Activated CD8-positive, alpha-beta T cell treated with anti-CD3 and anti-CD28 coated beads, Interleukin-2, amount 10 ng/mL, durations not matched to agents 7 days and 5 days (primary cell): ENCODE measurements at regions of chr14 and their contacts with region 1.

Region 1: GRCh38 chr14:35883677-35884293 is 57.6 kb downstream of the BRMS1L start:
- DNase-seq: peak; percentile 57
- ATAC-seq: peak; percentile 49
- H3K4me3 Mint-ChIP-seq: no peak overlapping the region
- H3K27ac Mint-ChIP-seq: no peak overlapping the region
- H3K4me1 Mint-ChIP-seq: peaks cover 9% of the 10 kb centered on the region
- H3K27me3 Mint-ChIP-seq: no peaks in the 10 kb centered on the region

Region 2: DNA sequence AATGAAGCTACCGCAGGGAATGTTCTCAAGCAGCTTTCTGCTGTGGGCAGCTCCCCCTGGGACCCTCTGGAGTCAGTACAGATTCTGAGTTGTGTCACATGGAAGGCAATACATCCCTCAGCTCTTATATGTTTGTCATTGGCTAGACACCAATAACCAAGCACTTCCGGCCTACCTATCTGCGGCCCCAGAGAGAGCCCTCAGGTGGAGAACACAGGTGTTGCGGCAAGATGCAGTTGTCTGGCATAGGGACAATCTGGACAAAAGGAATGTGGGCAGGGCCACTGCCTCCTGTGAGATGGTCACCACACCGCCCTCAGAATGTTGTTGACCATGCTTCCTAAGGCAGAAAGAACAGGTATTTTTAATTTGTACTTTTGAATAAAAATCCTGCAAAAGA is 61.1 kb after region 1 on chr14:
- CTCF ChIA-PET with region 1: interaction called, 44 read pairs
- POLR2A ChIA-PET with region 1: no interaction called
- DNase-seq: peak; percentile 44
- ATAC-seq: no peak
- H3K4me3 Mint-ChIP-seq: no peak overlapping the region
- H3K27ac Mint-ChIP-seq: no peak overlapping the region
- H3K4me1 Mint-ChIP-seq: peaks cover 15% of the 10 kb centered on the region
- H3K27me3 Mint-ChIP-seq: no peaks in the 10 kb centered on the region

Region 3: GRCh38 chr14:35959835-35960234 is 76.0 kb after region 1 on chr14:
- CTCF ChIA-PET with region 1: interaction called, 11 read pairs
- POLR2A ChIA-PET with region 1: no interaction called
- DNase-seq: no peak
- ATAC-seq: no peak
- H3K4me3 Mint-ChIP-seq: no peak overlapping the region
- H3K27ac Mint-ChIP-seq: no peak overlapping the region
- H3K4me1 Mint-ChIP-seq: no peaks in the 10 kb centered on the region
- H3K27me3 Mint-ChIP-seq: peaks cover 11% of the 10 kb centered on the region

Region 4: GRCh38 chr14:36028218-36028617 is 144.4 kb after region 1 on chr14:
- CTCF ChIA-PET with region 1: interaction called, 13 read pairs
- POLR2A ChIA-PET with region 1: no interaction called
- DNase-seq: peak; percentile 33
- ATAC-seq: no peak
- H3K4me3 Mint-ChIP-seq: no peak overlapping the region
- H3K27ac Mint-ChIP-seq: no peak overlapping the region
- H3K4me1 Mint-ChIP-seq: no peaks in the 10 kb centered on the region
- H3K27me3 Mint-ChIP-seq: peaks cover 19% of the 10 kb centered on the region

Region 5: GRCh38 chr14:36373982-36374673 is 490.3 kb after region 1 on chr14:
- CTCF ChIA-PET with region 1: interaction called, 19 read pairs
- POLR2A ChIA-PET with region 1: no interaction called
- DNase-seq: peak; percentile 78
- ATAC-seq: peak; percentile 83
- H3K4me3 Mint-ChIP-seq: no peak overlapping the region
- H3K27ac Mint-ChIP-seq: no peak overlapping the region
- H3K4me1 Mint-ChIP-seq: no peaks in the 10 kb centered on the region
- H3K27me3 Mint-ChIP-seq: peaks cover 4% of the 10 kb centered on the region